ENCODE measurements at regions of chr1 and their contacts with region 1.

Region 1: GRCh38 chr1:236603991-236604904 is at the start of gene HEATR1:
- DNase-seq: peak; percentile 97

Region 2: DNA sequence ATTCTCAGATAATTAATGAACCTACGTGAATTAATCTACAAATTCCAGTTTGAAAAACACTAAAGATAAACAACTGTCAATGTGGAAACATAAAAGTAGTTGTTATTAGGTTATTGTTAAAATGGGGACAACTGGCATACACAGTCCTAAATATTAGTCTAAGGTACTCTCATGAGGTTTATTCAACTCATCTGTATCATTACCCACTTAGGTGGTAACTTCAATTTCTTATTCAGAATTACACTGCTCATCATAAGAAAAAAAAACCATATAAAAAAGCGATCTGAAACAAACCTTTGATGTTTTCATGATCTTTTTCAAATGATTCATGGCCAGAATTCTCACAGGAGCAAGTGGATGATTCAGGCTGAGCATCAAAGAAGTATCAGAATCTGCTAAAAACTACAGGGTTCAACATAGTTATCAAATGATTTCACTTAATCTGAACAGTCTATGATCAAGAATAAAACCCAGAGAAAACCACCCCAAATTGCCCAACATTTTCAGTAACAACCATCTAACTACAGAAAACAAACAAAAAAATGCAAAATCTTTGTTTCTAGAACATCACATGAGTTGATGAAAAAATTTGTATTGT is 13.6 kb before region 1 on chr1:
- CTCF ChIA-PET with region 1: interaction called, 3 read pairs
- POLR2A ChIA-PET with region 1: interaction called, 10 read pairs
- DNase-seq: no peak

Region 3: DNA sequence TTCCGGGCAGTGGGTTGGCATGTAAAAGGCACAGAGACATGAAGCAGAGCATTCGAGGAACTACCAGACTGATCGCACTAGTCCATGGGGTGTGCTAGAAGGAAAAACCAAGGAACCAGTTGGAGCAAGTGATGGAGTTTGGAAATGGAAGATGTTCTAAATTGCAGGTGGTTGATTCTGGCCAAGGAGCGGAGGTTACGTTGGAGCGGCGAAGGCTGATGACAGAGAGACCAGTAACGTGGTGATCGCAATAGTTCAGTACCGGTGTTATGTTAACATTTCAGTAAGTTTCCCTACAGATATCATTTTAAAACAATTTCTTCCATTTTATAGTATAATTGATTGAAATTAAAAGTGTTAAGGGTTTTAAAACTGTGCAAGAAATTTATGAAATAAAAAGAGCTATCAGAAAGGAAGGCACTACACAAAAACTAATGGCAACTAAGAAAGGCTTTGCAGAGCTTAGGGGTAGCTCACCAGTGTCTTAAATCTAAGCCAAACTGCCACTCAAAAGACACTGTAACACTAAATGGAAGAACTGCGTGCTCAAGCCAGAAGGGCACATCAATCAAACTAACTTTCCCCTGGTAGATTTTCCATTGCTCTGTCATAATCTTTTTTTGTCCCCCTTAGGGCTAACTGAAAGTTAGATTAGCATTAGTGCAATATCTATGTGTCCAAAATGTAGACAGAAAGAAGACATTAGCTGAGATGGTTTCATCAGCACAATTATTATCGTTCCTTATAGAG is 11.3 kb after region 1 on chr1:
- CTCF ChIA-PET with region 1: interaction called, 4 read pairs
- POLR2A ChIA-PET with region 1: interaction called, 13 read pairs
- DNase-seq: no peak

Region 4: DNA sequence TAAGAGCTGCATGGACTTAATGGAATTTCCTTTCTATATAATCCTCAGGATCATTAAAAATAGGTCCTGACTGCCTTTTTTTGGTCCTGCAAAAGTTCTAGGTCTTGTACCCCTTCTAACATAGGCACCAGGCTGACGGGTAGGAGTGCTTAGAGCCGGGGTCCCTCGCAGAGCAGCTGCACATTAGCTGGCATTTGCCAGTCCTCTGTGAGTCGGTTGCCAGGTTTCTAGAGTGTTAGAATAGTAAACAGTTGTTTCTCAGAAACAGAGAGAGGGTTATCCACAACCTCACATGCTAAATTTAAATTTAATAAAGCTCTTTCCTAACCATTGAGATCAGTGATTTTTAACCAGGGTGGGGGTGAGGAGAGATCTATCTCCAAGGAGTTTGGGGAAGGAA is 35.4 kb after region 1 on chr1:
- CTCF ChIA-PET with region 1: no interaction called
- POLR2A ChIA-PET with region 1: interaction called, 12 read pairs
- DNase-seq: no peak

Region 5: DNA sequence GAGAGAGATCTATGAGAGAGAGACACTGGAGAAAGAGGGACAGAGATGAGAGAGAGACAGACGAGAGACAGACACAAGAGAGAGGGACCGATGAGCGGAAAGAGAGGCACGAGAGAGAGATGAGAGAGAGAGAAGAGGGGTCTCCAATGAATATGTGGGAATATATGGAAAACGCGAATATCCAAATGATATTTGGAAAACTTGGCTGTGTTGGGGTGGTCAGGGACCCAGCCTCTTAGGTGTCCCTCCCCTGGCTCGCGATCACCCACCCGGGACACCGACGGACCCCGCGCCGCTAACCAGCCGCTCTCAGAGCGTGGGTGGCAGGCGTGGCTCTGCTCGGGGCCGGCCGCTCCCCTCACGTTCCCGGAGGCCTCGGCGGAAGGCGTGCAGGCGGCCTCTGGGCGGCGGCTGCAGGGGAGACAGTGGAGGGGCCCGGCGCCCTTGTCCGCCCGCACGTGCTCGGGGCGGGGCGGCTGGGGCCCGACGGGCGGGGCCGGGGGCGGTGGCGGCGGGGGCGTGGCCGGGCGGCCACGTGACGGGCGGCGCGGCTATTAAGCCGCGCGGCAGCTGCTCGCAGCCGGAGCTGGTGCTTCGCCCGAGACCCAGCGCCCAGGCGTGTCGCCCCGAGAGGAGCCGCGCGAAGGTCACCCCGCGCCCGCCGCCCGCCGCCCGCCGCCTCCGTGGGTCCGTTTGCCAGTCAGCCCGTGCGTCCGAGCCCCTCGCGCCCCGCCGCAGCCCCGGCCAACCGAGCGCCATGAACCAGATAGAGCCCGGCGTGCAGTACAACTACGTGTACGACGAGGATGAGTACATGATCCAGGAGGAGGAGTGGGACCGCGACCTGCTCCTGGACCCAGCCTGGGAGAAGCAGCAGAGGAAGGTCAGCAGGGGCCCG is 81.9 kb after region 1 on chr1 and contains the start of gene ACTN2:
- CTCF ChIA-PET with region 1: no interaction called
- POLR2A ChIA-PET with region 1: interaction called, 12 read pairs
- DNase-seq: peak; percentile 93

Region 6: GRCh38 chr1:236795035-236795756 is 190.9 kb after region 1 on chr1 and contains the start of gene MTR:
- CTCF ChIA-PET with region 1: no interaction called
- POLR2A ChIA-PET with region 1: interaction called, 44 read pairs
- DNase-seq: peak; percentile 100

Region 7: DNA sequence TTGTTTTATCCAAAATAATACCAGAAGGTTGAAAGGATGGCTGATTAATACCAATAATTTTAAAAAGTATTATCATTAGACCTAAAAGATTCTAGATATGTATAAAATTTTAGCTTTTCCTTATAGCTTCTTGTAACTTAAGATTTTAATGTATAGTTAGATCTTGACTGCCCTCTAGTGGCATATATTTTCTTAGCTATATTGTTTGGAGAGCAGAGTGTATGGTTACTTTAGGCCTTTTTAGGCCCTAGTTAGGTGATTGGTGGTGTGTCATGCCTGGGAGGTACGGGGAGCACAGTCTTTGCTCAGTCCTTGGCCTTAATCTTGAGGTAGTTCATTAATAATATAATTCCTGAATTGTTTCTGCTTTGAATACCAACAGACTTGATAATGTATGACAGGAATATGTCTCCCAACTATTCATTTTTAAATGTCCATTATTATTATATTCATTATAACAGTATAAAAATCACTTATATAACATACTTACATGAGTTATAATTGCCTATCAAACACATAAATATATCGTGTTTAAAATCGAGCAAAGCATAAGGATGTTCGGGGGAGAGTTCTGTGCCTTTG is 958.1 kb after region 1 on chr1:
- CTCF ChIA-PET with region 1: no interaction called
- POLR2A ChIA-PET with region 1: interaction called, 11 read pairs
- DNase-seq: peak; percentile 58